GM12878 (cell line): ENCODE measurements at regions of chr3 and their contacts with region 1.

Region 1: DNA sequence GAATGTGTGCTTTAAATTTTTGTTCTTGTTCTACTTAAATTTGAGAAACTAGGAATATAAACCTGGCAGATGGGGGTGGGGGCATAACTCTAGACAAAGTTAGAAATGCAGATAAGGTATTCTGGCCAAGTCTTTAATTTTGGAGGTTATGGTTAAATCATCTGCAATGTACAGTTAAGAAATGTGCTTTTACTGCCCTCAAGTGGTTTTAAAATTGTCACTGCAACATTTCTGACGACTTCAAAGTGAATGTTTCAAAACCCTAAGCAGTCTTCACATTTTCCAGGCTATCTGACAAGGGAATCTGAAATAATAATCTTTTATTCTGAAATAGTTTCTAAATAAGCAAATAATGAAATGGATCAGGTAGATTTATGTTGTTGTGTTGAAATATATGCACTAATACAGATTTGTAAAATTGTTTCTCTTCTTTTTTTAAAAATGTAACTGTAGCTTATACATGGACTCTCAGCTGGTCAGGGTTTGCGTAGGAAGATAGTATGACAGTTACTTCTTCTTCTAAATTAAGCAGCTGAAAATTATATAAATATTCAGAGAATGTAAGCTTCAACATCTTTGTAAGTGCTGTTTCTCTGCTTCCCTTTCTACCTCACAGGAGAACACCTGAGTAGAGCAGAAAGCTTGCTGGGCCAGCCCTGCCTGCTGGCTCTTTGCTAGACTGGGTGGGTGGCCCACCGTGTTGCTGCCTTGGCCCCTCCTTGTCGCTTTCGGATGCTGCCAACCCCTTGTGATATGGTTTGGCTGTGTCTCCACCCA is 45.0 kb downstream of the SUCNR1 start:
- DNase-seq: peak; percentile 16
- ATAC-seq: peak; percentile 89
- H3K4me3 ChIP-seq: no peak overlapping the region
- H3K27ac ChIP-seq: no peak overlapping the region
- H3K4me1 ChIP-seq: no peaks in the 10 kb centered on the region
- H3K27me3 ChIP-seq: no peaks in the 10 kb centered on the region
- CTCF ChIP-seq: peak; percentile 44 to 74 (median 55); a peak in 5 of 6 replicates
- EP300 ChIP-seq: no peak
- POLR2A ChIP-seq: no peak
- RAD21 ChIP-seq: peak; percentile 86

Region 2: DNA sequence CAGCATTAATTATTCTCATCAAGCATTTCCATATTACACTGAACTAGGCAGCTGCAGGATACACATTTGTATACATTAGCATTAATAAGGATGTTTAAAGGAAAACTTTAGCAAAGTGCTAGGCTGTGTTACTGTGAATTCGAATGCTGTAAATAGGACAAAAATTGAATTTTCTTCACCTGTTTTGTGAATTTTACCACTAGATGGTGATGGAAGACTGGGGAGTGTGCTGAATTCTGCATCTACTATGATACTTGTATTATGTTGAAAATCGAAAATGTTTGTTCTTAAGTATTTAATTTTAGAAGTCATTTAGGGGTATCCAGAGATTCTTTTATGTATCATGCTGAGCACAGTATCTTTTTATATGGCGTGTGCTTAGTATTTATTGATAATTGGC is 627.8 kb before region 1 on chr3:
- CTCF ChIA-PET with region 1: no interaction called
- POLR2A ChIA-PET with region 1: no interaction called
- RAD21 ChIA-PET with region 1: no interaction called
- SMC1A ChIA-PET with region 1: no interaction called
- in situ Hi-C with region 1: no loop called
- intact Hi-C with region 1: loop called (anchors 5 kb)
- DNase-seq: no peak
- ATAC-seq: no peak
- H3K4me3 ChIP-seq: no peak overlapping the region
- H3K27ac ChIP-seq: no peak overlapping the region
- H3K4me1 ChIP-seq: no peaks in the 10 kb centered on the region
- H3K27me3 ChIP-seq: no peaks in the 10 kb centered on the region; a peak in 1 of 4 replicates
- CTCF ChIP-seq: peak in 2 of 3 experiments; percentile 5 to 41; a peak in 3 of 6 replicates
- EP300 ChIP-seq: no peak
- POLR2A ChIP-seq: no peak
- RAD21 ChIP-seq: peak; percentile 83

Region 3: DNA sequence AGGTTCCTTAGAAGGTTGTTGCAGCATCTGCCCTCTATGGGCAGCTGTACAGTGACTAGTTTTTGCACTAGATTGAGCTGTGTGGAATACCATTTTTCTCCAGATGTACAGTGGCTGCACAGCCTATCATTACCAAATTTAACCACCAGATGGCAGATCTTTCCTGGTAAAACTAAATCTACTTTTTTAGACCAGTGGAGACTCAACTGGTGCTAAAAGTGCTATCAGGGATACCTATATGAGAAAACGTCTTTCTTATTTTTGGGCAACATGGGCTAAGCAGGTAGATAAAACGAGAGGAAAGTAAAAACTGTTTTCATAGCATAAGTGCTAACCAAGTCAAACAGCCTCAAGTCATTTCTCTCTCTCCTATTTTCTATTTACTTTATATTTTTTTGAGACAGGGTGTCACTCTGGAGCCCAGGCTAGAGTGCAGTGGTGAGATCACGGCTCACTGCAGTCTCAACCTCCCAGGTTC is 478.8 kb before region 1 on chr3:
- CTCF ChIA-PET with region 1: interaction called, 32 read pairs
- POLR2A ChIA-PET with region 1: no interaction called
- RAD21 ChIA-PET with region 1: interaction called, 11 read pairs
- SMC1A ChIA-PET with region 1: interaction called, 9 read pairs
- in situ Hi-C with region 1: loop called (anchors 5 kb)
- intact Hi-C with region 1: loop called (anchors 1 kb)
- DNase-seq: no peak
- ATAC-seq: peak; percentile 92
- H3K4me3 ChIP-seq: no peak overlapping the region
- H3K27ac ChIP-seq: no peak overlapping the region
- H3K4me1 ChIP-seq: no peaks in the 10 kb centered on the region
- H3K27me3 ChIP-seq: no peaks in the 10 kb centered on the region
- CTCF ChIP-seq: peak; percentile 63 to 70 (median 70)
- EP300 ChIP-seq: no peak
- POLR2A ChIP-seq: no peak
- RAD21 ChIP-seq: peak; percentile 68

Region 4: GRCh38 chr3:151838583-151839312 is 79.7 kb before region 1 on chr3:
- CTCF ChIA-PET with region 1: interaction called, 18 read pairs
- POLR2A ChIA-PET with region 1: no interaction called
- RAD21 ChIA-PET with region 1: interaction called, 11 read pairs
- SMC1A ChIA-PET with region 1: interaction called, 4 read pairs
- in situ Hi-C with region 1: no loop called
- intact Hi-C with region 1: loop called (anchors 2 kb)
- DNase-seq: peak; percentile 2
- ATAC-seq: peak; percentile 87
- H3K4me3 ChIP-seq: no peak overlapping the region
- H3K27ac ChIP-seq: no peak overlapping the region
- H3K4me1 ChIP-seq: no peaks in the 10 kb centered on the region
- H3K27me3 ChIP-seq: no peaks in the 10 kb centered on the region
- CTCF ChIP-seq: peak; percentile 66 to 75 (median 73); a peak in 5 of 6 replicates
- EP300 ChIP-seq: no peak
- POLR2A ChIP-seq: no peak
- RAD21 ChIP-seq: peak; percentile 87

Region 5: GRCh38 chr3:152011812-152012735 is 93.6 kb after region 1 on chr3:
- CTCF ChIA-PET with region 1: no interaction called
- POLR2A ChIA-PET with region 1: no interaction called
- RAD21 ChIA-PET with region 1: no interaction called
- SMC1A ChIA-PET with region 1: no interaction called
- in situ Hi-C with region 1: no loop called
- intact Hi-C with region 1: no loop called
- DNase-seq: no peak
- ATAC-seq: no peak
- H3K4me3 ChIP-seq: no peak overlapping the region
- H3K27ac ChIP-seq: no peak overlapping the region
- H3K4me1 ChIP-seq: no peaks in the 10 kb centered on the region
- H3K27me3 ChIP-seq: no peaks in the 10 kb centered on the region
- CTCF ChIP-seq: no peak
- EP300 ChIP-seq: no peak
- POLR2A ChIP-seq: no peak
- RAD21 ChIP-seq: no peak